OCI-LY7 (cell line): ENCODE measurements at regions of chr14 and their contacts with region 1.

Region 1: GRCh38 chr14:61475316-61475715 is 153.9 kb downstream of the PRKCH start:
- DNase-seq: peak; percentile 91
- H3K4me3 ChIP-seq: no peak overlapping the region
- H3K27ac ChIP-seq: peak overlapping the region; percentile 92
- H3K4me1 ChIP-seq: peaks cover 100% of the 10 kb centered on the region
- CTCF ChIP-seq: peak; percentile 99

Region 2: DNA sequence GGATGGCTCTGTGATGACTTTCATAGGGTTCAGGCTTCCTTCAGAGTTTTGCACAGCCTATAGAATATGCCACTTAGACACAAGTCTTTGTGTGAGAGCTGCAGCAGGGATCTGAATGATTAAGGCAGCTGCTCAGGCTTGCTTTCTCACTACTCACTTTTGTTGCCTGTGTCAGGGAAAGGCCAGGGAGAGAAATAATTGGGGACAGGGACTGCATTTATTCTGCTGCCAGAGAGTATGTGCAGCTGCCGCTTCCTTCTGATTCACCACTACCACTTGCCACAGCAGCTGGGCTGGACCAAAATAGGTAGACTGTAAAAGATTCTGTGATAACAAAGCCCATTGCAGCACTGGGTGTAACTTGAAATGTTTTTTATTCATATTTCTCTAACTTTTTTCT is 544.1 kb before region 1 on chr14:
- CTCF ChIA-PET with region 1: no interaction called
- POLR2A ChIA-PET with region 1: no interaction called
- intact Hi-C with region 1: no loop called
- DNase-seq: peak; percentile 28
- H3K4me3 ChIP-seq: no peak overlapping the region
- H3K27ac ChIP-seq: no peak overlapping the region
- H3K4me1 ChIP-seq: peaks cover 7% of the 10 kb centered on the region
- CTCF ChIP-seq: no peak

Region 3: DNA sequence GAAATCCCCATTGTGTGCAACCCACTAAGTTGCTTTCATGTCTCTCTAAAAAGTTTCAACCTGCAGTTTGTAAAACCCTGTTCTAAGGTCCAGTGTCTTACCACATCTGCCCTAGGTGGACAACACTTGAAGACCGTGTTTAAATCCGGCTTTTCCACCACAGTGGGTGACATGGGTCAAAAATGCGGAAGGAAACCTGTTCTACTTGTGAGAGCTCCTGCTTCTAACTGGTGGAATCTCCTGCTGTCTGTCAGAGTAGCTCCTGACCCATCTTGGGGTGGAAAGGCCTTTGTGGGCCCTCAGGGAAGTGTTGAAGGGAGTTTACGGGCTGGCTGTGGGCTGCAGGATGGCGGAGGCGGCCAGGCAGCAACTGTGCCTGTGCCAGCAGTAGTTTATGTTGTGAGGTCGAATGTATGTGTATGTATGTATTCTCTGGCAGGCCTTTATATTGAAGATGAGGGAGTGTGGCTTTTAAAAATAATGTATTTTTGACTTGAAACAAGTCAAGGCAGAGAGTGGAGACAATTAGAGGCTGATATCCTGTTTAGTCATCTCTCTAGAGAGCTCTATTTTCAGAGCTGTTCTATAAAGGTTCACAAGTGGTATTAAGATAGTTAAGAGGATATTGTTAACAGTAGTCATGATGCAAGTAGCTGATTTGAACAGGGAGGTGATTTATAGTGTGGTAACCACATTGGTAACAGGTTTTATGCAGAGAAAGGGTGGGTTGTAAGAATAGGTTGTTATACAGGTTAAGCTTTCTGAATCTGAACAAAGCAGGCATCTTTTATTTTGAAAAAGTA is 86.9 kb before region 1 on chr14:
- CTCF ChIA-PET with region 1: no interaction called
- POLR2A ChIA-PET with region 1: no interaction called
- intact Hi-C with region 1: no loop called
- DNase-seq: no peak
- H3K4me3 ChIP-seq: no peak overlapping the region
- H3K27ac ChIP-seq: no peak overlapping the region
- H3K4me1 ChIP-seq: peaks cover 5% of the 10 kb centered on the region
- CTCF ChIP-seq: no peak

Region 4: GRCh38 chr14:61503167-61503801 is 28.0 kb after region 1 on chr14:
- CTCF ChIA-PET with region 1: interaction called, 16 read pairs
- POLR2A ChIA-PET with region 1: interaction called, 333 read pairs
- intact Hi-C with region 1: loop called (anchors 1 kb)
- DNase-seq: peak; percentile 94
- H3K4me3 ChIP-seq: peak overlapping the region; percentile 52
- H3K27ac ChIP-seq: peak overlapping the region; percentile 99
- H3K4me1 ChIP-seq: peaks cover 99% of the 10 kb centered on the region
- CTCF ChIP-seq: no peak; the same call in 1 of the 2 replicates

Region 5: DNA sequence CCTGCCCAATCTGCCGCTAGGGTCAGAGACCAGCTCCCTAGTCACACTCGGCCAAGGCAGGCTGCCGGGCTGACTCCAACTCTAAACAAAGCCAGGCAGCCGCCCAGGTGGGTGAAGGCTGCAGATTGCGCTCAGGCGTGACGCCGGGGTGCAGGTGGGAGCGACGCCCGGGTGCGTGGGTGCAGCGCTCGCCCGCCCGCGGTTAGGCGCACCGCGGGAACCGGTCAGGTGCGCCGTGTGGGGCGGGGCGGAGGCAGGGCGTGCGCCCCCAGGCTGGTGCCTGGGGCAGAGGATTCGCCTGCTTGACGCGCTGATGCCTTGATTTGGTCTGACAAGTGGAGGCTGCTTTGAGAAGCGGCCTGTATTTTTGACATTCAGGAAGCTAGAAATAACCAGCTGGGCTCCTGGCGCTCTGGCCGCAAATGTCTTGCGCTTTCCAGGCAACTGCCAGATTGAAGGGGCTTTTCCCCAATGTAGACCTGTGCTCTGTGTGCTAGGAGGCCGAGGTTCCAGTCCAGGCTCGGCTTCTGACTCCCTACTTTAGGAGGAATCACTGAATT is 93.3 kb after region 1 on chr14:
- CTCF ChIA-PET with region 1: interaction called, 9 read pairs
- POLR2A ChIA-PET with region 1: interaction called, 34 read pairs
- intact Hi-C with region 1: loop called (anchors 1 kb)
- DNase-seq: peak; percentile 98
- H3K4me3 ChIP-seq: peak overlapping the region; percentile 53
- H3K27ac ChIP-seq: peak overlapping the region; percentile 93
- H3K4me1 ChIP-seq: peaks cover 77% of the 10 kb centered on the region
- CTCF ChIP-seq: peak; percentile 65

Region 6: DNA sequence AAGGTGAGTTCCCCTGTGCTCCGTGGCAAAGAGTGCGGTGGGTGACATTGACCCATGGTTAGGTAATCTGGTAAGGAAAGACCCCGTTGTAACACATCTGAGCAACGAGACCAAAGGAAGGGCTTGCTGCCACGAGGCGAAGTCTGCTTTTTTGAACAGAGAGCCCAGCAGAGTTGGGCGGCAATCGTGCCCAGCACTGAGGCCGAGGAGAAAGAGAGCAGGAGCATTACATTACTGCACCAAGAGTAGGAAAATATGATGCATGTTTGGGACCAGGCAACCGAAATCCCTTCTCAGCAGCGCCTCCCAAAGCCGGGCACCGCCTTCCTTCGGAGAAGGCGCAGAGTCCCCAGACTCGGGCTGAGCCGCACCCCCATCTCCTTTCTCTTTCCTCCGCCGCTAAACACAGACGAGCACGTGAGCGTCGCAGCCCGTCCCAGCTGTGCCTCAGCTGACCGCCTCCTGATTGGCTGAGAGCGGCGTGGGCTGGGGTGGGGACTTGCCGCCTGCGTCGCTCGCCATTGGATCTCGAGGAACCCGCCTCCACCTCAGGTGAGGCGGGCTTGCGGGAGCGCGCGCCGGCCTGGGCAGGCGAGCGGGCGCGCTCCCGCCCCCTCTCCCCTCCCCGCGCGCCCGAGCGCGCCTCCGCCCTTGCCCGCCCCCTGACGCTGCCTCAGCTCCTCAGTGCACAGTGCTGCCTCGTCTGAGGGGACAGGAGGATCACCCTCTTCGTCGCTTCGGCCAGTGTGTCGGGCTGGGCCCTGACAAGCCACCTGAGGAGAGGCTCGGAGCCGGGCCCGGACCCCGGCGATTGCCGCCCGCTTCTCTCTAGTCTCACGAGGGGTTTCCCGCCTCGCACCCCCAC is 219.7 kb after region 1 on chr14 and contains the start of gene HIF1A:
- CTCF ChIA-PET with region 1: interaction called, 3 read pairs
- POLR2A ChIA-PET with region 1: interaction called, 32 read pairs
- intact Hi-C with region 1: loop called (anchors 1 kb)
- DNase-seq: peak; percentile 99
- H3K4me3 ChIP-seq: peak within 1 kb of the TSS; percentile 91
- H3K27ac ChIP-seq: peak within 1 kb of the TSS; percentile 74
- H3K4me1 ChIP-seq: peaks cover 37% of the 10 kb centered on the region
- CTCF ChIP-seq: peak; percentile 40; the same call in 1 of the 2 replicates
- total RNA-seq, gene HIF1A: 59.5 and 71.7 TPM in 2 replicates

Region 7: GRCh38 chr14:61730756-61731373 is 255.5 kb after region 1 on chr14:
- CTCF ChIA-PET with region 1: interaction called, 3 read pairs
- POLR2A ChIA-PET with region 1: interaction called, 14 read pairs
- intact Hi-C with region 1: loop called (anchors 1 kb)
- DNase-seq: peak; percentile 46
- H3K4me3 ChIP-seq: no peak overlapping the region
- H3K27ac ChIP-seq: peak overlapping the region; percentile 21
- H3K4me1 ChIP-seq: peaks cover 22% of the 10 kb centered on the region
- CTCF ChIP-seq: peak; percentile 93

Region 8: DNA sequence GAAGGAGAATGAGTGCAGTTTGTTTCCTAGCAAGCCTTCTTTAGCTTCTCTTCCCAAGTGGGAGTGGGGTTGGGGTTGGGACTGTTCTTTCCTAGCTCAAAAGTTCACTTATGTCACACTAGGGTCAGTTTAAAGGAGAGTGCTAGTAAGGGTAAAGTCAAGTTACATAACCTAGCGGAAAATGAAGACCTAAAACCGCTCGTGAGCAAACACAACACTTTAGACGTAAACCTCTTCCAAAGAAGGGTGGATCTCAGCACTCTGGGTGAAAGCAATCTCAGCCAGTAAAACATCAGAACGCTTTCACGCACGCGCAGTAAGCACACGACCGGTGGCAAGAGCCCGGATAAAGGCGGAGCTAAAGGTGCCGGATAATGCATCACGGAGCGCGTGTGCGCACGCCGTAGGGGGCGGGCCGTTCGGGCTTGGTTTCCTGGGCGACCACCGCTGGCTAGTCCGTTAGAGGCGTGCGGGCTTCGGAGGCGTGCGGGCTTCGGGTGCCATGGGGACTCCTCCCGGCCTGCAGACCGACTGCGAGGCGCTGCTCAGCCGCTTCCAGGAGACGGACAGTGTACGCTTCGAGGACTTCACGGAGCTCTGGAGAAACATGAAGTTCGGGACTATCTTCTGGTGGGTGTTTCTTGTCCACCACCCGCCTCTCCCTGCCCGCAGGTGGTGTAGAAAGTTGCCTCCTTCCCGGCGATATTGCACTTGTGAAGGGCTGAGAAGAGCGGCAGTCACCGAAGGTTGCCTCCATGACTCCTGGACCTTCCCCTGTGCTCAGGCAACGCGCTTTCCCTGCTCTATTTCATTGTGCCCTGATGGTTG is 286.9 kb after region 1 on chr14 and contains the start of gene SNAPC1:
- CTCF ChIA-PET with region 1: interaction called, 9 read pairs
- POLR2A ChIA-PET with region 1: interaction called, 13 read pairs
- intact Hi-C with region 1: loop called (anchors 2 kb)
- DNase-seq: peak; percentile 100
- H3K4me3 ChIP-seq: peak within 1 kb of the TSS; percentile 92
- H3K27ac ChIP-seq: peak within 1 kb of the TSS; percentile 74
- H3K4me1 ChIP-seq: peaks cover 36% of the 10 kb centered on the region
- CTCF ChIP-seq: no peak
- total RNA-seq, gene SNAPC1: 10.5 and 11.7 TPM in 2 replicates